Mammary epithelial cell (primary cell): ENCODE measurements at regions of chr6 and their contacts with region 1.

Region 1: GRCh38 chr6:108835218-108835850 is 12.9 kb upstream of the ARMC2 start:
- DNase-seq: peak; percentile 42
- H3K4me3 ChIP-seq: no peak overlapping the region
- H3K27ac ChIP-seq: no peak overlapping the region
- H3K4me1 ChIP-seq: peaks cover 20% of the 10 kb centered on the region
- H3K27me3 ChIP-seq: no peaks in the 10 kb centered on the region
- CTCF ChIP-seq: peak; percentile 82 to 91

Region 2: GRCh38 chr6:108535114-108535742 is 300.1 kb before region 1 on chr6:
- CTCF ChIA-PET with region 1: no interaction called
- dilution Hi-C with region 1: no loop called
- in situ Hi-C with region 1: loop called (anchors 5 kb)
- intact Hi-C with region 1: no loop called
- DNase-seq: no peak
- H3K4me3 ChIP-seq: no peak overlapping the region
- H3K27ac ChIP-seq: no peak overlapping the region
- H3K4me1 ChIP-seq: no peaks in the 10 kb centered on the region
- H3K27me3 ChIP-seq: no peaks in the 10 kb centered on the region
- CTCF ChIP-seq: no peak

Region 3: DNA sequence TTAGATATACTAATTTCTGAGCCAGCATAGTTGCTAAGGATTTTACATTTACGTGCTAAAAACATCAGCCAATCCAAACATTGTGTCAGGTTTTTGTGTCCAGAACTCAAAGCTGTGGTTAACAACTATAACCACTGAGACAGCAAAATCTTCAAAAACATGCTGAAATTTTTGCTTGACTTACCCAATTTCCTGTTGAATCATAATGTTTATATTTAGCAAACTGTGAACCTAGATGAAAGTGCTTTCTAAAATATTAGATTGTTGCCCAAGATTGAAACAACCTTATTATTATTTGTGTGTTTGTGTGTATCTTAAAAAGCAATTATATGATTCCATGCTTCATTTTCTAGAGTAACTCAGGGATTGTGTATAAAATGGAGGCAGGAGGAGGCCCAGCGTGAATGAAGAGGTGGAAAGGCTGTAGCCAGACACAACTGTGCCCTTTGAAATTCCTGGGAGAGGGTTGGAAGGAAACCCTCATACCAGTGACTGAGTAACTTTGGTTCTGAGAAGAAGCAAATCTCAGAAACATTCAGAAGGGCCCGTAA is 60.9 kb after region 1 on chr6:
- CTCF ChIA-PET with region 1: no interaction called
- dilution Hi-C with region 1: no loop called
- in situ Hi-C with region 1: no loop called
- intact Hi-C with region 1: loop called (anchors 1 kb)
- DNase-seq: peak; percentile 77
- H3K4me3 ChIP-seq: no peak overlapping the region
- H3K27ac ChIP-seq: peak overlapping the region; percentile 69
- H3K4me1 ChIP-seq: peaks cover 22% of the 10 kb centered on the region
- H3K27me3 ChIP-seq: no peaks in the 10 kb centered on the region
- CTCF ChIP-seq: no peak

Region 4: GRCh38 chr6:108921547-108922361 is 86.4 kb after region 1 on chr6:
- CTCF ChIA-PET with region 1: no interaction called
- dilution Hi-C with region 1: no loop called
- in situ Hi-C with region 1: no loop called
- intact Hi-C with region 1: no loop called
- DNase-seq: peak; percentile 56
- H3K4me3 ChIP-seq: no peak overlapping the region
- H3K27ac ChIP-seq: no peak overlapping the region
- H3K4me1 ChIP-seq: no peaks in the 10 kb centered on the region
- H3K27me3 ChIP-seq: no peaks in the 10 kb centered on the region
- CTCF ChIP-seq: no peak